ENCODE measurements at regions of chr1 and their contacts with region 1.

Region 1: GRCh38 chr1:112715264-112716053 is at the start of gene PPM1J:
- DNase-seq: peak; percentile 66 to 97 (median 82)

Region 2: GRCh38 chr1:112646225-112646624 is 69.2 kb before region 1 on chr1:
- intact Hi-C with region 1: no loop called
- DNase-seq: no peak

Region 3: DNA sequence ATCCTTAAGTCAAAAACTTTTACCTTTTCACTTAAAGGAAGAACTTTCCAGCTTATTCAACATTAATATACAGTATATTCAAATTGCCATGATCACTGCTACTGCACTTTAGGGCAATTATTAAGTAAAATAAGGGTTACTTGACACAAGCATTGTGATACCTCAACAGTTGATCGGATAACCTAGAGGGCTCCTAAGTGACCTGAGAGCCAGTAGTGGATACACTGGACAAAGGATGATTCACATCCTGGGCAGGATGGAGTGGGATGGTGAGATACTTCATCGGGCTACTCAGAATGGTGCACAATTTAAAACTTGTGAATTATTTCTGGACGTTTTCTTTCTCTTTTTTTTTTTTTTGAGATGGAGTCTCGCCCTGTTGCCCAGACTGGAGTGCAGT is 54.2 kb after region 1 on chr1:
- intact Hi-C with region 1: no loop called
- DNase-seq: no peak

Region 4: GRCh38 chr1:112803906-112804762 is 88.7 kb after region 1 on chr1:
- intact Hi-C with region 1: loop called (anchors 1 kb)
- DNase-seq: peak; percentile 57 to 97 (median 76)

Region 5: GRCh38 chr1:112882271-112882744 is 166.8 kb after region 1 on chr1:
- intact Hi-C with region 1: loop called (anchors 5 kb)
- DNase-seq: peak in 3 of 10 donors; percentile 13 to 86 (median 83)

Region 6: DNA sequence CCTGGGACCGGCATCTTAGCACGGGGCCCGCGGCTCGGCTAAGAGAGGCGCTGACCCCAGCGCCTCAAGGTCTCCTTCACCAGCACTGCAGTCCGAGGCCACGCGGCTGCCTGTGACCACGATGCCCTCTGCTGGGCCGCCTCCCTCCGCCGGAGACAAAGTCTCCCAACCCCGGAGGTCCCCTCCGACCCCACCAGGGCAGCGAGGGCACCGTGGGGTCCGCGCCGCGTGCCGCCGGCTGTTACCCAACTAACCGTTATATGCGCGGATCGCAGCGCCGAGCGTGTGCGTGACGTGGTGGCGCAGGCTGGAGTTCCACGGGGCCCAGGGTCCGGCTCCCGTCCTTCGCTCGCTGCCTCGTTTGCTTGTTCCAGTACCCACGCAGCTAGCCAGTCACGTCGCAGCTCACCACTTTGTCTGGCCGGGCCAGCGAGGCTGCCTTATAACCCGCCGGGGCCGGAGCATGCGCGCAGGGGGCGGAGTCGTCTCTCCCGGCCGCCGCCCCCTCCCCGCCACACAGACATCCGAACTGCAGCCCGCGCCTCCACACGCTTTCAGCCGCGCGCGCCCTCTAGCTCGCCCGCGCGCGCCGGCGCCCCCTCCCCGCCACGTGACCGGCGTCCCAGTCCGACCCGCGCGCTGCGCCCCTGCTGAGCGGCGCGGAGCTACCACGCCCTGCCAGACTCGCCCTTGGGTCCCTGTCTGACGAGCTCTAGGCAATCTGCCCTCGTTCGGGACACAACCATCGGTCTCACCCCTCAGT is 240.5 kb after region 1 on chr1 and contains the start of gene SLC16A1:
- intact Hi-C with region 1: loop called (anchors 2 kb)
- DNase-seq: peak; percentile 91 to 99 (median 93)

Region 7: GRCh38 chr1:113042285-113043143 is 327.1 kb after region 1 on chr1:
- intact Hi-C with region 1: loop called (anchors 10 kb)
- DNase-seq: peak; percentile 53 to 96 (median 76)

Region 8: DNA sequence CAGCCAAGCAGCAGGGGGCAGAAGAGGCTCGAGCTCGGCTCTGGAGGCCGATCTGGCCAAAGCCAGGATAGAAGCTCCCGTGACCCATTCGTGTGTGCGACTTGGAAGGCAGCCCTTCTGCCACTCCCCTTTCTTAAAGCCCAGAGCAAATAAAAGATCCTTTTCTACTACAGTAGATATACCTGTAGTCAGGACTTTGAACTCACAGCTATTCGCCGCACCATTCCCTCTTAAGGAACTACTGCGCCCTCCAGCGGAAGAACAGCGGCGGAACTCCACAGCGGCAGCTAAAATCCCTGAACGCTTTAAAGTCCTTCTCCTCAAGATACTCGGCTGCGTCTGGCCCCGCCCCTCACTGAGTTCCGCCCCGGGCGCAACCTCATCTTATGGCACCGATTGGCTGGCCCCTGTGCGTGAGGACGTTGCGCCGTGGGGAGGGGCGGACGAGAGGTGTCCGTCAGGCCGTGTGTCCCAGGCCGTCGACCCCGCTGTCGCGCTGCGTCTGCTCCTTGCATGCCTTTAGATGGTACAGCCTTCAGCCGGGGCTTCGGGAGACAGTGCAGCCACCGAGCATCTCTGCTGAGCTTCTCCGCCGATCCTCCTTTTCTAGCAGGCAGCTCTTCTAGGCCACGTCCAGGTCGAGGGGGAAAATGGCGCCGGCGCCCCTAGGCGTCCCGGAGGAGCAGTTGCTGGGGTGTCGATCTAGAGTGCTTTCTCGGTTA is 357.5 kb after region 1 on chr1 and contains the start of gene LRIG2:
- intact Hi-C with region 1: loop called (anchors 2 kb)
- DNase-seq: peak; percentile 95 to 100 (median 98)

Measured in posterior cingulate gyrus (tissue), 11 donors.